ENCODE measurements at regions of chr15 and their contacts with region 1.

Region 1: GRCh38 chr15:29090617-29091466 is 178.8 kb downstream of the NSMCE3 start:
- DNase-seq: peak; percentile 64
- ATAC-seq: peak; percentile 54
- H3K4me3 Mint-ChIP-seq: peak overlapping the region; percentile 70
- H3K27ac Mint-ChIP-seq: peak overlapping the region; percentile 93
- H3K4me1 Mint-ChIP-seq: peaks cover 37% of the 10 kb centered on the region
- H3K27me3 Mint-ChIP-seq: no peaks in the 10 kb centered on the region

Region 2: GRCh38 chr15:28935326-28935725 is 155.5 kb before region 1 on chr15:
- CTCF ChIA-PET with region 1: interaction called, 11 read pairs
- POLR2A ChIA-PET with region 1: no interaction called
- DNase-seq: peak; percentile 82
- ATAC-seq: peak; percentile 76
- H3K4me3 Mint-ChIP-seq: no peak overlapping the region
- H3K27ac Mint-ChIP-seq: peak overlapping the region; percentile 27
- H3K4me1 Mint-ChIP-seq: peaks cover 70% of the 10 kb centered on the region
- H3K27me3 Mint-ChIP-seq: no peaks in the 10 kb centered on the region

Region 3: GRCh38 chr15:28989239-28989830 is 101.5 kb before region 1 on chr15:
- CTCF ChIA-PET with region 1: interaction called, 19 read pairs
- POLR2A ChIA-PET with region 1: no interaction called
- DNase-seq: peak; percentile 45
- ATAC-seq: peak; percentile 37
- H3K4me3 Mint-ChIP-seq: no peak overlapping the region
- H3K27ac Mint-ChIP-seq: no peak overlapping the region
- H3K4me1 Mint-ChIP-seq: peaks cover 26% of the 10 kb centered on the region
- H3K27me3 Mint-ChIP-seq: no peaks in the 10 kb centered on the region

Region 4: DNA sequence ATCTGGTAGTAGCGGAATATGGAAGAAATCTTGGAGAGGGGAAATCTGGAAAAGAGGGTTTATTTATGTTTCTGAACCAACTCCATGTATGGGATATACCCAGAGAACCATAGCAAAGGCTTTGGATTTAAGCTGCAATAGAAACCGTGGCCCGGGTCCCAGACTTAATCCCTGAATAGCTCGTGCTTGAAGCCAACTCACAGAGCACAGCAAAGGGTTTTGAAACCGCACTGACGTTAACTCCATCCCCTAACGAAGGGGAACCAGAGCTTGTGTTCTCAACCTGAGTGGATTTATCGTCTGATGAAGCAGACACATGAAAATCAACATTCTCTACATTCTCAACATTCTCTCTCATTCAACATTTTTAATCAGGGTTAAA is 50.5 kb before region 1 on chr15:
- CTCF ChIA-PET with region 1: interaction called, 13 read pairs
- POLR2A ChIA-PET with region 1: no interaction called
- DNase-seq: no peak
- ATAC-seq: no peak
- H3K4me3 Mint-ChIP-seq: no peak overlapping the region
- H3K27ac Mint-ChIP-seq: peak overlapping the region; percentile 77
- H3K4me1 Mint-ChIP-seq: peaks cover 46% of the 10 kb centered on the region
- H3K27me3 Mint-ChIP-seq: no peaks in the 10 kb centered on the region

Region 5: DNA sequence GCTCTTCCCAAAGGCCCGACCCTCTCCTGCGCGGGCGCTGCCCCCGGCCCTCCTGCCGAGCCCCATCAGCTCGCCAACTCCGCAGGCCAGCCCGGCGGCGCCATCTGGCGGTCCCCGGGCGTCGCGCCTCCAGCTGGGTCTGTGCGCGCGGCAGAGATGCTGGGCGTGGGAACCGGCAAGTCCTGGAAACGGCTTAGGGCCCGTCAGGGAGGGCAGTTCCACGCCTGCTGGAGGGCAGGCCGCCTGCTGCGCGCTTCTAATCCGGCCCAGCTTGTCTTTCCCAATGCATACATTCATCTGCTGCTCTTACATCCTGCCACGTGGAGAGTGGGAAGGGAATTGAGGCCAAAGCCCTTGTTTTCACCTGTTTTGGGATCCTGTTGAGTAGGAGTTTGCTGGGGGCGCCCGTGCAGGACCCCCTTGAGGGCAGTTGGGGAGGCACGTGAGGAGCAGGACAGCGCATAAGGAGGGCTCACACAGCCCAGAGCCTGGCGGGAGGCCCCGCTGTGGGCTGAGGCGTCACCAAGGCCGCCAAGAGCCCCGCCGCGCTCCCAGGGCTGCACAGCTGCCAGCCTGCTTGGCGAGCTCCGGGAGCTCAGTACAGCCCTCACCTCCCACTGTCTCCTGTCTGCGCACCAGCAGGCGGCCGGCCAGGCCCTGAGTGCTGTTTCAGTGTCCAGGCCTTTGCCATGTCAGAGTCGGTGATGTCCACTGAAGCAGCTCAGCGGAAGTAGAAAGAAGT is 13.2 kb after region 1 on chr15:
- CTCF ChIA-PET with region 1: interaction called, 72 read pairs
- POLR2A ChIA-PET with region 1: no interaction called
- DNase-seq: peak; percentile 67
- ATAC-seq: peak; percentile 83
- H3K4me3 Mint-ChIP-seq: no peak overlapping the region
- H3K27ac Mint-ChIP-seq: no peak overlapping the region
- H3K4me1 Mint-ChIP-seq: peaks cover 10% of the 10 kb centered on the region
- H3K27me3 Mint-ChIP-seq: no peaks in the 10 kb centered on the region

Region 6: GRCh38 chr15:29131840-29132420 is 41.1 kb after region 1 on chr15:
- CTCF ChIA-PET with region 1: no interaction called
- POLR2A ChIA-PET with region 1: no interaction called
- DNase-seq: no peak
- ATAC-seq: no peak
- H3K4me3 Mint-ChIP-seq: no peak overlapping the region
- H3K27ac Mint-ChIP-seq: no peak overlapping the region
- H3K4me1 Mint-ChIP-seq: peaks cover 4% of the 10 kb centered on the region
- H3K27me3 Mint-ChIP-seq: peaks cover 3% of the 10 kb centered on the region

Measured in activated CD8-positive, alpha-beta T cell treated with anti-CD3 and anti-CD28 coated beads, Interleukin-2, amount 10 ng/mL, durations not matched to agents 7 days and 5 days (primary cell).